CD4-positive, alpha-beta memory T cell (primary cell): ENCODE measurements at regions of chr11 and their contacts with region 1.

Region 1: DNA sequence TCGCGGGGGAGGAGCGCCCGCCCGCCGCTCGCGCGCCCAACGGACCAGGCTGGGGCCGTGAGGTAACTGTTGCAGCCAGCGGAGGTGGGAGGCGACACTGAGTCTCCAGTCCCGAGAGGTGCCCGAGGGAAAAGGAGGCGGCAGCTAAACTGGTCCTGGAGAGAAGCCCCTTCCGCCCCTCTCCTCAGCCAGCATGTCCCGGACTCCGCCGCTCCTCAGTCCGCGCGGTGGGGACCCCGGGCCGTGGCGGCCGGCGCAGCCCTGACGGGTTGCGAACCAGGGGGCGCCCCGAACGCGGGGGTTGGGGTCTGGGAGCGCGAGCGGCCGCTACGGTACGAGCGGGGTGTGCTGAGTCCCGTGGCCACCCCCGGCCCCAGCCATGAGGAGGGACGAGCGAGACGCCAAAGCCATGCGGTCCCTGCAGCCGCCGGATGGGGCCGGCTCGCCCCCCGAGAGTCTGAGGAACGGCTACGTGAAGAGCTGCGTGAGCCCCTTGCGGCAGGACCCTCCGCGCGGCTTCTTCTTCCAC is at the start of gene PDE3B:
- DNase-seq: peak; percentile 65 to 71 (median 65)
- H3K4me3 ChIP-seq: peak within 1 kb of the TSS; percentile 89 to 95
- H3K4me3 Mint-ChIP-seq: peak within 1 kb of the TSS; percentile 91 to 97 (median 95)
- H3K27ac ChIP-seq: peak within 1 kb of the TSS; percentile 68
- H3K27ac Mint-ChIP-seq: peak within 1 kb of the TSS; percentile 79 to 94 (median 91)
- H3K4me1 ChIP-seq: peaks cover 65% of the 10 kb centered on the region
- H3K4me1 Mint-ChIP-seq: peaks cover 43 to 65% (median 54%) of the 10 kb centered on the region in 4 donors
- H3K27me3 ChIP-seq: no peaks in the 10 kb centered on the region
- H3K27me3 Mint-ChIP-seq: peaks cover 0 to 2% of the 10 kb centered on the region in 2 donors
- total RNA-seq, gene PDE3B: 219 to 222 TPM

Region 2: DNA sequence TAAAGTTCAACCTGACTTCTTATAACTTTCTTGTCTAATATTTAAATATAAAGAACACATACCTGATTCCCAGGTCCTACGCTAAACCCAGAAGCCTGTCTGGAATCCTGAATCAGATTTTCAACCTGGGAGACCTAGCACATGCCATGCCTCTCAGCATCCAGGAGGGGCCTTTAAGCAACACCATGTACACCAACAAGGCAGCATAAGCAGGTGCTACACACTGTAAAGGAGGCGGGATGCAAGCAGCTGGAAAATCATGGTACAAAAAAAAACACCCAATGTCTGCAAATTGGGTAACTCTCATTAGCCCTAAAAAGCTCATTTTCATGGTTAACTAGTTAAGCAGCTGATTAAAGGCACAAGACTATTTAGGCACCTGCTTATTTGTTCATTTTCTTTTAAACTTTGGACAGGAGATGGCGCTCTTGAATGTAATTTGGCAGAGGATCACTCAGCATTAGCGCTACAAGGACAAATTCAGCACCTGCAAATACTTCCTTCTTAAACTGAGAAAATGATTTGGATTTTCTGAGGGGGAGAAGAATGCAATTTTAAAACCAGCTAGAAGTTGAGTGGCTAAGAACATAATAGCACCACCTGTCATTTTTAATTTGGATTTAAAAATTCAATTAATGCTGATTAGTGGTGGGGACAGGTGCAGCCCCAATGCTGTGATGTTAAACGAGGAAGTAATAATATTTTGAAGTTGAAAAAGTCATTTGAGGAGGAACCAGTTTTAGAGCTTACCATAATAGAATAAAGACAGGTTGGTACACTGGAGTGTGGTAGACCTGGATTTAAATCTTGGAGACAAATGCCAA is 871.3 kb before region 1 on chr11:
- CTCF ChIA-PET with region 1: no interaction called
- POLR2A ChIA-PET with region 1: no interaction called
- intact Hi-C with region 1: no loop called
- DNase-seq: peak in 4 of 5 donors; percentile 72 to 78 (median 73)
- H3K4me3 ChIP-seq: no peak overlapping the region
- H3K4me3 Mint-ChIP-seq: no peak overlapping the region
- H3K27ac ChIP-seq: no peak overlapping the region
- H3K27ac Mint-ChIP-seq: no peak overlapping the region
- H3K4me1 ChIP-seq: no peaks in the 10 kb centered on the region
- H3K4me1 Mint-ChIP-seq: peaks cover 2 to 6% (median 5%) of the 10 kb centered on the region in 4 donors
- H3K27me3 ChIP-seq: no peaks in the 10 kb centered on the region
- H3K27me3 Mint-ChIP-seq: peaks cover 4% of the 10 kb centered on the region in 2 donors

Region 3: DNA sequence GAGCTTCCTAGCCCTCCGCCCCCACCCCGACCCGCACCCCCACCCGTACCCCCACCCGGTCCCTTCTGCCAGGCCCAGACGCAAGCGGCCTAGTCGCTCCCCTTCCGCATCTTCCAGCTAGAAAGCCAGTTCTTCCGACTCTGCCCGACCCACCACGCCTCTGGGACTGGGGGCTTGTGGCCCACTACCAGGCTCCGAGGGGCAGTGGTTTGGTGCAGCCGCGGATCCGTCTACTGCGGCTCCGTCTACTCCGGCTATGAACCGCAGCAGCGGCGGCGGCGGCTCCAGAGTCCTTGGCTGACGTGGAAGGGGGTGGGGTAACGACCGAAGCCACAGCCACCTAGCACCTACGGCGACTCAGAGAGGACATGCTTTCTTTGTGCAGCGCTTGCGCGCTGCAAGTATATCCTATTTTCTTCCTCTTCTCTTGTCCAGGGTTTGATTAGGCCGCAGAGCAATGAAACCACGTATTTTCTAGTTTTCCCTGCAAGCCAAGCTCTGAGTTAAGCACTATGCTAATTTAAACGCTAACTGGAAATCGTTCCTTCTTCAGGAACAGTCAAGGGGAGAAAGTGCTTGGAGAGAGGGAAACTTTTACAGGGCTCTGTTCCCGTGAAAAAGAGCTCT is 144.1 kb before region 1 on chr11 and contains the start of gene COPB1:
- CTCF ChIA-PET with region 1: interaction called, 4 read pairs
- POLR2A ChIA-PET with region 1: interaction called, 21 read pairs
- intact Hi-C with region 1: no loop called
- DNase-seq: peak; percentile 91 to 95 (median 92)
- H3K4me3 ChIP-seq: peak within 1 kb of the TSS; percentile 76 to 89
- H3K4me3 Mint-ChIP-seq: peak within 1 kb of the TSS; percentile 92 to 100 (median 94)
- H3K27ac ChIP-seq: peak within 1 kb of the TSS; percentile 65
- H3K27ac Mint-ChIP-seq: peak within 1 kb of the TSS; percentile 82 to 100 (median 98)
- H3K4me1 ChIP-seq: peaks cover 49% of the 10 kb centered on the region
- H3K4me1 Mint-ChIP-seq: peaks cover 28 to 57% (median 35%) of the 10 kb centered on the region in 4 donors
- H3K27me3 ChIP-seq: no peaks in the 10 kb centered on the region
- H3K27me3 Mint-ChIP-seq: no peaks in the 10 kb centered on the region
- total RNA-seq, gene COPB1: 79.8 to 82.1 TPM

Region 4: DNA sequence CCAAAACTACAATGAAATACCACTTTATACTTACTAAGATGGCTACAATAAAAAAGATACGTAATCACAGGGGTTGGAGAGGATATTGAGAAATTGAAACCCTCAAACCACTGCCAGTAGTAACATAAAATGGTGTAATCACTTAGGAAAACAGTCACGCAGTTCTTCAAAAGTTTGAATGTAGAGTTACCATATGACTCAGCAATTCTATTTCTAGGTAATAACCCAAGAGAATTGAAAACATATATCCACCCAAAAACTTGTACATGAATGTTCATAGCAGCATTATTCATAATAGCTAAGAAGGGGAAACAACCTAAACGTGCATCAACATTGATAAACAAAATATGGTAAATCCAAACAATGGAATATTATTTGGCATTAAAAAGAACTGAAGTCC is 99.2 kb before region 1 on chr11:
- CTCF ChIA-PET with region 1: interaction called, 36 read pairs
- POLR2A ChIA-PET with region 1: interaction called, 29 read pairs
- intact Hi-C with region 1: no loop called
- DNase-seq: no peak
- H3K4me3 ChIP-seq: no peak overlapping the region
- H3K4me3 Mint-ChIP-seq: no peak overlapping the region
- H3K27ac ChIP-seq: no peak overlapping the region
- H3K27ac Mint-ChIP-seq: no peak overlapping the region
- H3K4me1 ChIP-seq: peaks cover 6% of the 10 kb centered on the region
- H3K4me1 Mint-ChIP-seq: peaks cover 0 to 12% (median 4%) of the 10 kb centered on the region in 4 donors
- H3K27me3 ChIP-seq: no peaks in the 10 kb centered on the region
- H3K27me3 Mint-ChIP-seq: no peaks in the 10 kb centered on the region

Region 5: GRCh38 chr11:14578541-14578956 is 65.2 kb before region 1 on chr11:
- CTCF ChIA-PET with region 1: interaction called, 43 read pairs
- POLR2A ChIA-PET with region 1: interaction called, 168 read pairs
- intact Hi-C with region 1: loop called (anchors 1 kb)
- DNase-seq: peak; percentile 88 to 94 (median 91)
- H3K4me3 ChIP-seq: peak overlapping the region in 1 of 2 donors; percentile 25
- H3K4me3 Mint-ChIP-seq: peak overlapping the region; percentile 18 to 76 (median 57)
- H3K27ac ChIP-seq: peak overlapping the region; percentile 70
- H3K27ac Mint-ChIP-seq: peak overlapping the region; percentile 83 to 99 (median 97)
- H3K4me1 ChIP-seq: peaks cover 44% of the 10 kb centered on the region
- H3K4me1 Mint-ChIP-seq: peaks cover 46 to 68% (median 59%) of the 10 kb centered on the region in 4 donors
- H3K27me3 ChIP-seq: no peaks in the 10 kb centered on the region
- H3K27me3 Mint-ChIP-seq: no peaks in the 10 kb centered on the region

Region 6: DNA sequence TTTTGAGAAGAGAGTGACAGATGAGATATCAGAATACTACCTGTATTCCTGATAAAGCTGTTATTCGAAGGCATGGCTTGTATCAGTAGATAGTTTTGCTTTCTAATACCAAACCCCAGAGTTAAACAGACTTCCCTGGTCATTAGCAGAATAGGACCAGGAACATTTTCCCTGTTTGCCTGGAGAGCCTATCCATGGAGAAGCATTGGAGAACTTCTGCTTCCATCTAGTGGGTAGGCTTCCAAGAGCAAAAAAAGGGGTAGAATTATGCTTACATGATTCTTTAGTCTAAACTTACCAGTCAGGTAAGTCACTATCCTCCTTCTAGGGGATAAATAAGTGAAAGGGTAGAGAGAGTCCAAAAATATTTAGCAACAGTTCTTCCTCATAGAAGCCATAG is 14.1 kb after region 1 on chr11:
- CTCF ChIA-PET with region 1: interaction called, 5 read pairs
- POLR2A ChIA-PET with region 1: interaction called, 7 read pairs
- intact Hi-C with region 1: loop called (anchors 2 kb)
- DNase-seq: no peak
- H3K4me3 ChIP-seq: no peak overlapping the region
- H3K4me3 Mint-ChIP-seq: no peak overlapping the region
- H3K27ac ChIP-seq: no peak overlapping the region
- H3K27ac Mint-ChIP-seq: no peak overlapping the region
- H3K4me1 ChIP-seq: peaks cover 19% of the 10 kb centered on the region
- H3K4me1 Mint-ChIP-seq: peaks cover 28 to 46% (median 36%) of the 10 kb centered on the region in 4 donors
- H3K27me3 ChIP-seq: no peaks in the 10 kb centered on the region
- H3K27me3 Mint-ChIP-seq: no peaks in the 10 kb centered on the region

Region 7: GRCh38 chr11:14803846-14804245 is 160.1 kb after region 1 on chr11:
- CTCF ChIA-PET with region 1: no interaction called
- POLR2A ChIA-PET with region 1: no interaction called
- intact Hi-C with region 1: no loop called
- DNase-seq: no peak
- H3K4me3 ChIP-seq: no peak overlapping the region
- H3K4me3 Mint-ChIP-seq: no peak overlapping the region
- H3K27ac ChIP-seq: no peak overlapping the region
- H3K27ac Mint-ChIP-seq: no peak overlapping the region
- H3K4me1 ChIP-seq: no peaks in the 10 kb centered on the region
- H3K4me1 Mint-ChIP-seq: peaks cover 0 to 12% (median 7%) of the 10 kb centered on the region in 4 donors
- H3K27me3 ChIP-seq: no peaks in the 10 kb centered on the region
- H3K27me3 Mint-ChIP-seq: no peaks in the 10 kb centered on the region

Region 8: DNA sequence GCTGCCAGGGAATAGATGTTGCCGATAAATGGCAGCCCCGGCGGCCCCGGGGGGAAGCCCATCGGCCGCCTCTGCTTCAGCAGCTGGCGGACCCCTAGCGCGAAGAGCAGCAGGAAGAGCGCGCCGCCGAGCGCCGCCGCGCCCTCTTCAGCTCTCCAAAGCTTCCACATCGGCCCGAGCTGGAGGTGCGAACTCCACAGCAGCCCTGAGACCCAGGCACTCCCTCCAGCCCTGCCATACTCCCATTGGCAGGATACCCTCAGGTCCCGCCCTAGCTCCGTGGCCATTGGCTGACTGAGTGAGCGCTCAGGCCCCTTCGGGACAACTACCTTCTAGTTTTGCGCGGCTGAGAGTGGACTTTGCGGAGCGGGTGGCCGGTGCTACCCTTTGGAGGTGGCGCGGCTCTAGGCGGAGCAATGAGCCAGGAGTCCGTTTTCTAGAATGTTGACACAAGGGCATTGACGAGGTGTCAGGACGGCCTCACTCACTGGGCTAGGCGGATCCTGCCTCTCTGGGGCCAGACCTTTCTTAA is 248.3 kb after region 1 on chr11 and contains the start of gene CYP2R1:
- CTCF ChIA-PET with region 1: interaction called, 7 read pairs
- POLR2A ChIA-PET with region 1: interaction called, 21 read pairs
- intact Hi-C with region 1: loop called (anchors 5 kb)
- DNase-seq: peak; percentile 88 to 92 (median 91)
- H3K4me3 ChIP-seq: peak within 1 kb of the TSS; percentile 91 to 96
- H3K4me3 Mint-ChIP-seq: peak within 1 kb of the TSS; percentile 90 to 99 (median 94)
- H3K27ac ChIP-seq: peak within 1 kb of the TSS; percentile 80
- H3K27ac Mint-ChIP-seq: peak within 1 kb of the TSS; percentile 94 to 99 (median 96)
- H3K4me1 ChIP-seq: peaks cover 36% of the 10 kb centered on the region
- H3K4me1 Mint-ChIP-seq: peaks cover 17 to 48% (median 34%) of the 10 kb centered on the region in 4 donors
- H3K27me3 ChIP-seq: no peaks in the 10 kb centered on the region
- H3K27me3 Mint-ChIP-seq: no peaks in the 10 kb centered on the region
- total RNA-seq, gene CYP2R1: 12.1 to 14.7 TPM

Region 9: DNA sequence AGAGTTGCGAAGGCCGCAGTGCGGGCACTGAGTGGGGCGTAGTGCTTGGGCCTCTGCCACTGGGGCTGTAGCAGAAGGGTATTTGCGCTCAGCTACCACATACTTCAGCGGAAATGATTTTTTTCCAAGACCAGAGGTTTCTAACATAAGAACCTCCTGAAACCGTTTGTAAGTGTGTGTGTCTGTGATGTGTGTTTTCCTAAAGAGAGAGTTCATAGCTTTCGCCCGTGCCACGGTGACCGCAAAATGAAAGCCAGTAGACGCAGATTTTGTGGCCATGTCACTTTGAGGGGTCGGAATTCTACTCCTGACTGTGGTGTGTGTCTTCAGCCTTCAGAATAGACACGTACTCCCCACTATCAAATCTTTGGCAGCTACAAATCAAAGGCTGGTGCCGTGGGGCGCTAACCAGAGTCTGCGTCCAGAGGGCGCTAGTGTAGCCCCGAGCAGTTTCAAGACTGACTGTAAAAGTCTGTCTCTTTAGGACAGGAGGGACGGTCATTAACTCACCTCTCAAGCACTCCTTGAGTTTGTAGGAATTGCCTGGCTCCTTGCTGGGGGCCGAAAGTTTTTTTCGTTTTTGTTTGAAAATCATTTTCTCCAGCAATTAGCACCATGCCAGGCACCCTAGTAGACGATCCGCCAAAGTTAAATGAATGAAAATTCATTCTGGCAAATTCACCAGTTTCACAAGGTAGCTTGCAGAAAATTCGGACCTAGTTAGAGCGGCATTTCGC is 330.9 kb after region 1 on chr11:
- CTCF ChIA-PET with region 1: no interaction called
- POLR2A ChIA-PET with region 1: no interaction called
- intact Hi-C with region 1: no loop called
- DNase-seq: peak; percentile 42 to 56 (median 52)
- H3K4me3 ChIP-seq: peak overlapping the region; percentile 0 to 1
- H3K4me3 Mint-ChIP-seq: peak overlapping the region; percentile 73 to 88 (median 85)
- H3K27ac ChIP-seq: no peak overlapping the region
- H3K27ac Mint-ChIP-seq: peak overlapping the region in 1 of 7 donors; percentile 30
- H3K4me1 ChIP-seq: peaks cover 28% of the 10 kb centered on the region
- H3K4me1 Mint-ChIP-seq: peaks cover 14 to 39% (median 23%) of the 10 kb centered on the region in 4 donors
- H3K27me3 ChIP-seq: peaks cover 48% of the 10 kb centered on the region
- H3K27me3 Mint-ChIP-seq: peaks cover 44 to 45% of the 10 kb centered on the region in 2 donors